Right ventricle myocardium inferior (tissue), 1 donor: ENCODE measurements at regions of chr7 and their contacts with region 1.

Region 1: GRCh38 chr7:2087744-2088143 is 145.0 kb downstream of the MAD1L1 start:
- DNase-seq: no peak
- ATAC-seq: no peak

Region 2: GRCh38 chr7:1899196-1899595 is 188.5 kb before region 1 on chr7:
- intact Hi-C with region 1: loop called (anchors 5 kb)
- DNase-seq: peak; percentile 70
- ATAC-seq: peak; percentile 50

Region 3: GRCh38 chr7:2009541-2010001 is 78.2 kb before region 1 on chr7:
- intact Hi-C with region 1: loop called (anchors 1 kb)
- DNase-seq: peak; percentile 85
- ATAC-seq: peak; percentile 79

Region 4: DNA sequence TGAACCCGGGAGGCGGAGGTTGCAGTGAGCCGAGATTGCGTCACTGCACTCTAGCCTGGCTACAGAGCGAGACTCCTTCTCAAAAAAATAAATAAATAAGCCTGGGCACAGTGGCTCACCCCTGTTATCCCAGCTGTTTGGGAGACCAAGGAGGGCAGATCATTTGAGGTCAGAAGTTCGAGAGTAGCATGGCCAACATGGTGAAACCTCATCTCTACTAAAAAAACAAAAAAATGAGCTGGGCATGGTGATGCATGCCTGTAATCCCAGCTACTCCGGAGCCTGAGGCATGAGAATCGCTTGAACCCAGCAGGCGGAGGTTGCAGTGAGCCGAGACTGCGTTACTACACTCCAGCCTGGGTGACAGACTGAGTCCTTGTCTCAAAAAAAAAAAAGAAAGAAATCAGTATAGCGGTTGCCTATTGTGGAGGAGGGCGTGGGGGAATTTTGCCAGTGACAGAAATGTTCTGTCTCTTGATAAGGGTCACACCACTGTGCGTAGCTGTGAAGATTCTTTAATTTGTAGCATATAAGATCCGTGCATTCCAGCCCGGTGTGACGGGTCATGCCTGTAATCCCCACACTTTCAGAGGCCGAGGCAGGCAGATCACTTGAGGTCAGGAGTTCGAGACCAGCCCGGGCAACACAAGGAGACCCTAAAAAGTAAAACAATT is 249.0 kb after region 1 on chr7:
- intact Hi-C with region 1: no loop called
- DNase-seq: no peak
- ATAC-seq: no peak